H1 (cell line): ENCODE measurements at regions of chr5 and their contacts with region 1.

Region 1: DNA sequence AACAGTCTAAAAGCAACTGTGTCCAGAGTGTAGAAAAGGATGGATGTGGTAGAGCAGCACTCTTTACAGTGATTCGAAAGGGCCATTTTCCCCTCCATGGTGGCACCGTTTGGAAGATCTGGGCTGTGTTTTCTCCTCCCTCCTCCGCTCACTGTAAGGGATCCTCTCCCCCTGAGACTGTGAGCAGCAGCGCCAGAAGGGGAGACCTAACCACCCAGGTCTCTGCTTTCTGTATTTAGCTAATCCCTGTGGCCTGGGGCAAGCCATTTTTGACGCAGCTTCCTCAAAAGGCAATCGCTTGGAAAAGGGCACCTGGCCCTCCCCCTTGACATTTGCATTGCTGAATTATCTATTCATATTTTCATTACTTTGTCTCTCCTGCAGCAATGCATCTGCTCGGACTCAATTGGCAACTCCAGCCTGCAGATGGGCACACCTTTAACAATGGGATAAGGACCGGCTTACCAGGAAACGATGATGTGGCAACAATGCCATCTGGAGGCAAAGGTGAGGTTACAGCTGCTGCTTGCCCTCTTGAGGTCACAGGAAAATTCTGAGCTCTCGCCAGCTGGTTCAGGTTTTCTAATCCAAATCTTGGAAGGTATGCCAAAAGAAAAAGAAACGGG is 244.3 kb upstream of the WWC1 start:
- DNase-seq: peak; percentile 54 to 78
- H3K4me3 ChIP-seq: peak overlapping the region in 1 of 4 experiments; percentile 33; a peak in 1 of 8 replicates
- H3K27ac ChIP-seq: no peak overlapping the region
- H3K4me1 ChIP-seq: peaks cover 4 to 10% (median 9%) of the 10 kb centered on the region in 4 experiments
- H3K27me3 ChIP-seq: no peaks in the 10 kb centered on the region
- CTCF ChIP-seq: peak; percentile 79 to 93 (median 88)
- EP300 ChIP-seq: no peak
- POLR2A ChIP-seq: no peak
- RAD21 ChIP-seq: peak; percentile 94 to 96

Region 2: DNA sequence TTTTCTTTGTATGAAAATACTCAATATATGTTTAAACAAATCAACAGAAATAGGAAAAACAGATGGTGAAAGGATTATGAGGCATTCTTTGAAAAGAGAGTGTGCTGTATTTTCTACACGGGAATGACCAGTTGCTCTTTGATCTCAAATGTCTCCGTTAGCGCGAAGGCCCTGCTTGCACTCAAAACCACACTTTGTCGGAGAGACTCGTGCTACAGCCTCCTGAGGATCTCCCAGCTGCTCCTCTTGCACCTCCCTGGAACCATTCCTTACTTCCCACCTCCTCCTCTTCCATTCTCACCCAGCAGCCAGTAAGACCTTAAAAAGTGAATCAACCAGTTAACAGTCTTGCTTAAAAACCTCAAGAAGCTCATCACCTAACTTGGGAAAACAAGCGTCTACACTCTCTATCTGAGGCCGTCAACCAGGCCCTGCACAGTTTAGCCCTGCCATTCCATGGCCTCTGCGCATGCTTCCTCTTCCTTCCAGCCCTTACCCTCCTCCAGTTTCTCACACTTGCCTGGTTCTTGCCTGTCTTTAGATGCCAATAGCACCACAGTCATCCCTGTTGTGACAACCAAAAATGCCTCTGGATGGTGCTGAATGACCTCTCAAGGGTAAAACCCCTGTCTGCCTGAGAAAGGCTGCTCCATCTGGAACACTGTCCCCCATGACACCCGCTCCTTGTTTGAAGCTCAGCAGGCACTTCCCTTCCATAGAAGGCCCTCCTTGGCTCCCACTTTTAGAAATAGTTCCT is 350.4 kb before region 1 on chr5:
- CTCF ChIA-PET with region 1: interaction called, 10 read pairs
- POLR2A ChIA-PET with region 1: no interaction called
- DNase-seq: no peak
- H3K4me3 ChIP-seq: no peak overlapping the region
- H3K27ac ChIP-seq: no peak overlapping the region
- H3K4me1 ChIP-seq: peaks cover 4 to 18% (median 7%) of the 10 kb centered on the region in 4 experiments; a peak in 6 of 7 replicates
- H3K27me3 ChIP-seq: no peaks in the 10 kb centered on the region
- CTCF ChIP-seq: peak in 1 of 3 experiments; percentile 21; a peak in 2 of 4 replicates
- EP300 ChIP-seq: no peak
- POLR2A ChIP-seq: no peak
- RAD21 ChIP-seq: peak; percentile 56 to 62

Region 3: DNA sequence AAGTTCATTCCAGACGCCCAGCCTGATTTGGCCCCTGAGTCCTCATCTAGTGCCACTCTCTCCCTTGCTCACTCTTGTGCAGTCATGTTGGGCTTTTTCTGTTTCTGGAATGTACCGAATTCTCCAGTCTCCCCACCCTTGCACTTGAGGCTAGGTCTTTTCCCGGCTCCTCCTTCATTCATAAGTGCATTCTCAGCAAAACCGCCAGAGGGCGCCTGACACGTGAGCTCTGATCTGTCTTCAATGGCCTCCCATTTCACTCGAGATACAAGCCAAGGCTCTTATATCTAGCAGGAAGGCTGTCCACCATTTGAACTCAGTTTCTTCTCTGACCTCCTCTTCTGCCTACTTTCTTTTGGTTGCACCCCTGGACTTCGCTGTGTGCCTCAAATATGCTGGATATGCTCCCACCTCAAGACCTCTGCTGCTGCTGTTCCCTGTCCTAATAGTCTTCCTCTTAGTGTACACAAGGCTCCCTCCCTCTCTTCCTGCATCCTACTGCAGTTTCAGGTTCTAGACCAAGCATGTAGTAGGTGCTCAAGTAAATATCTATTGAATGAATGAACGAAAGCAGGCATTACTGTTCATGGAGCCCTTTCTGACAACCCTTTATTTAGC is 323.8 kb before region 1 on chr5:
- CTCF ChIA-PET with region 1: interaction called, 21 read pairs
- POLR2A ChIA-PET with region 1: no interaction called
- DNase-seq: peak; percentile 67 to 90
- H3K4me3 ChIP-seq: no peak overlapping the region
- H3K27ac ChIP-seq: no peak overlapping the region
- H3K4me1 ChIP-seq: peaks cover 0 to 15% (median 8%) of the 10 kb centered on the region in 4 experiments; a peak in 2 of 7 replicates
- H3K27me3 ChIP-seq: no peaks in the 10 kb centered on the region
- CTCF ChIP-seq: peak; percentile 77 to 94 (median 89)
- EP300 ChIP-seq: no peak
- POLR2A ChIP-seq: no peak
- RAD21 ChIP-seq: peak; percentile 83 to 89

Region 4: GRCh38 chr5:168023191-168023590 is 24.0 kb before region 1 on chr5:
- CTCF ChIA-PET with region 1: interaction called, 14 read pairs
- POLR2A ChIA-PET with region 1: no interaction called
- DNase-seq: no peak
- H3K4me3 ChIP-seq: no peak overlapping the region
- H3K27ac ChIP-seq: no peak overlapping the region
- H3K4me1 ChIP-seq: no peaks in the 10 kb centered on the region; a peak in 1 of 7 replicates
- H3K27me3 ChIP-seq: no peaks in the 10 kb centered on the region
- CTCF ChIP-seq: no peak
- EP300 ChIP-seq: no peak
- POLR2A ChIP-seq: no peak
- RAD21 ChIP-seq: no peak

Region 5: DNA sequence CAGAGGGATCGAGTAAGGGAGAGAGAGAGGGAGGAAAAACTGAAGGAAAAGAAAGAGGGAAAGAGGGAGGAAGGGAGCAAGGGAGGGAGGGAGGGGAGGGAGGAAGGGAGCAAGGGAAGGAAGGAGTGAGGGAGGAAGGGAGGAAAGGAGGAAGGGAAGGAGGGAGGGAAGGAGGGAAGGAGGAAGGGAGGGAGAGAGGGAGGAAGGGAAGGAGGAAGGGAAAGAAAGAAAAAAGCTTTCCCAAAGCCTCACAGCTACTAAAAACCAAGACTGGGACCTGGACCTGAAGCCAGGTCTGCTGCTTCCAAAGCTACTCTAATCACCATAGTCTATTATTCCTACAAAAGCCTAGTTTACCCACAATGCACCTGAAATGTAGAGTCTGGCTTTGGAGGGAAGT is 15.5 kb before region 1 on chr5:
- CTCF ChIA-PET with region 1: interaction called, 14 read pairs
- POLR2A ChIA-PET with region 1: no interaction called
- DNase-seq: no peak
- H3K4me3 ChIP-seq: no peak overlapping the region
- H3K27ac ChIP-seq: no peak overlapping the region
- H3K4me1 ChIP-seq: no peaks in the 10 kb centered on the region
- H3K27me3 ChIP-seq: no peaks in the 10 kb centered on the region
- CTCF ChIP-seq: no peak
- EP300 ChIP-seq: no peak
- POLR2A ChIP-seq: no peak
- RAD21 ChIP-seq: no peak

Region 6: GRCh38 chr5:168057905-168058304 is 10.7 kb after region 1 on chr5:
- CTCF ChIA-PET with region 1: interaction called, 23 read pairs
- POLR2A ChIA-PET with region 1: no interaction called
- DNase-seq: no peak
- H3K4me3 ChIP-seq: no peak overlapping the region
- H3K27ac ChIP-seq: no peak overlapping the region
- H3K4me1 ChIP-seq: no peaks in the 10 kb centered on the region
- H3K27me3 ChIP-seq: no peaks in the 10 kb centered on the region
- CTCF ChIP-seq: no peak
- EP300 ChIP-seq: no peak
- POLR2A ChIP-seq: no peak
- RAD21 ChIP-seq: no peak